Activated CD4-positive, alpha-beta T cell treated with anti-CD3 and anti-CD28 coated beads for 36 hours (primary cell): ENCODE measurements at regions of chr19 and their contacts with region 1.

Region 1: DNA sequence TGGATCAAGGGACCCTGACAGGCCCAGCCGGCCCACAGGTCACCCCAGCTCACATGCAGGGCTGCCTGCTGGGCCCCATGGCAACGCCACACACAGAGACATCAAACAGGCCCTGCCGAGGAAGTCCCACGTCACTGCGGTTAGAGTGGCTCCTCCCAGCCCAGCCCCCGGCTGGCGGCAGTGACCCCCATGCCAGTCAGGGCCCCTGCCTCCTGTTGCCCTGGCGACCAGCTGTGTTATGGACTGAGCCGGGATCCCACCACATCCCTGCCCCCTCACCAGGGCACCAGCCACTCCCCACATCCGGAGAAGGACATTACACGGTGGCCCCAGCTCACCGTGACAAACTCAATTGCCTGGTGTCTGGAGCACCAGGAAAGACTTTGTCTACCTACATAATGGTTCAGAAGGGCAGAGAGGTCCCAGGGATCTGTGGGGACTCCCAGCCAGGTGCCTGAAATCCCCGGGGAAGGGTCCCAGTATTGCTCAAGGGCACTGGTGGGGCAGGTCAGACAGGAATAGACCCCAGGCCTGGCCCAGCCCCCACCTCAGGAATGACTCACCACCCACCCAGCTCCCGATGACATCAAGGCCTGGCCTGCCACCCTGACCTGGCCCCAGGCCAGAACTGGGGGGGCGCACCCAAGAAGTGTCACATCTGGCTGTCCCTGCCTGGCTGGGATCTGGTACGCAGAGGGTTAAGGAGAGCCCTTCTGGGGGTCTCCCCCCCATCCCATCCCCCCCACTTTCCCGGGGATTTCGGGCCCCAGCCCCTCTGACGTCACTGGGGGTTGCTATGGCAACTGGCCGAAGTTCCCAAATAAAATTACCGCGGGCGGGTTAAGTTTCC is 30.2 kb upstream of the NANOS3 start:
- DNase-seq: peak; percentile 97
- ATAC-seq: peak; percentile 69
- H3K4me3 Mint-ChIP-seq: peak overlapping the region; percentile 71
- H3K27ac Mint-ChIP-seq: peak overlapping the region; percentile 97
- H3K4me1 Mint-ChIP-seq: peaks cover 56% of the 10 kb centered on the region
- H3K27me3 Mint-ChIP-seq: no peaks in the 10 kb centered on the region

Region 2: DNA sequence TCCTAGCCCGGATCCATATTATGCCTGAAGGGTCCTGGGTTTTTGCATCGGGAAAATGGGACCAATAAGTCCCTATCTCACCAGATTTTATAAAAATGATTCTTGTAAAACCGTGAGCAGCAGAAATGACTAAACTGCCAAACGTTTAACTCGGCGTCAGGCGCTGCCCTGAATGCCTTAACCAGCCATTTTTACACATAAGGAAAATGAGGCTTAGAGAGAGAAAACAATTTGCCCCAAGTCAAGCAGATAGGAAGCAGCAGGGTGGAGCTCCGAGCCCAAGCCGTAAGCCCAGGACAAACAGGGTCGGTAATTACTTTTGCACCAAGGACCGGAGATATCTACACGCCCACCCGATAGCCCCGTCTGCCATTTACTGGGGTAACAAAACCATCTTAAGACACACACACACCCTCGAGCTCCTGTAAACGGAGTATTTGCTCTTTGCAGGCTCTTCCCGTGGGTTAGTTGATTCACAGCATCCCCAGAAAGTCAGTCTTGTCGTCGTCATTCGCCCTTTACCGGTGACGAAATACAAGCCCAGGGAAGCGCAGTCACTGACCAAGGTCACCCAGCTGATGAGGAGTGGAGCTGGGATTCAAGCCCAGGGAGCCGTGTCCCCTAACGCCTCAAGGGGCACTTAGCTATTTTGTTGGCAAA is 98.5 kb before region 1 on chr19:
- CTCF ChIA-PET with region 1: interaction called, 3 read pairs
- POLR2A ChIA-PET with region 1: no interaction called
- intact Hi-C with region 1: loop called in 1 of 2 experiments (anchors 1 kb)
- DNase-seq: peak; percentile 50
- ATAC-seq: peak; percentile 2
- H3K4me3 Mint-ChIP-seq: peak overlapping the region; percentile 80
- H3K27ac Mint-ChIP-seq: peak overlapping the region; percentile 84
- H3K4me1 Mint-ChIP-seq: peaks cover 30% of the 10 kb centered on the region
- H3K27me3 Mint-ChIP-seq: no peaks in the 10 kb centered on the region

Region 3: DNA sequence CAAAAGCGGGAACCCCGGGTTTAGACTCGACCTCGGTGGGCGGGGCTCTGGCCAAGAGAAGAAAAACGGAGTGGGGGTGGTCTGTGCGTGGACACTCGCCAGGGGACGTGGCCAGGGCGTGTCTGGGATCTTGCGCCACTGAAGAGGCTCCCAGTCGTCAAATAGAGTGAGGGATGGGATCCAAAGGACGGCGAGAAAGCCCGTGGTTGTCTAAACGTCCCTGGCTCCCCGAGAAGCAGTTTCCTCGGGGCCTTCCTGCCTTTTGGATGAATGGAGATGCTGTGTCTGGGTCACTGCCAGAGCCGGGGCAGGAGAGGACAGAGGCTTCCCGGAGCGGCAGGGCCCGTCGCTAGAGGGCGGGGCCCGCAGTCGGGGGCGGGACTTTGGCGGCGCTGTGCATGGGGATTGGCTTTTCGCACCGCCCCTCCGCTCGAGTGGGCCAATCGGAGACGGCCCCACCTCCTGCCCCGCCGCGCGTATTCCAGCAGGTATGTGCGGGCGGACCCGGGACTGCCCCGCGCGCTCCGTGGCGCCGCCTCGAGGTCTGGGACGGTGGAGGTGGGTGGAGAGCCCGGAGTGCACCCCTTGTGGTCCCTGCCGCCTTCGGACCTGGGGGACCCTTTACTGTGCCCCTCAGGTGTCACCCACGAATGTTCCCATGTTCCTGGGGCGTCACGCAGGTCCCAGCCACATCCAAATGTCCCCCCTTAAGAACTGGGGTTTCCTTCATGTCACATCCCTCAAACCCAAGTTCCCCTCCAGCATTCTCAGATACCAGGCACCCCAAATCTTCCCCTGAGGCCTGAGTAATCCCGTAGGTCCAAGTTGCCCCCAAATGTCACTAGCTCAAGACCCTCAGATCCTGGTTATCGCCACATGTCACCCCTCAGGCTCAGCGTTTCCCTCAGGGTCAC is 13.2 kb before region 1 on chr19:
- CTCF ChIA-PET with region 1: interaction called, 6 read pairs
- POLR2A ChIA-PET with region 1: interaction called, 36 read pairs
- intact Hi-C with region 1: loop called in 1 of 2 experiments (anchors 2 kb)
- DNase-seq: peak; percentile 97
- ATAC-seq: peak; percentile 90
- H3K4me3 Mint-ChIP-seq: peak overlapping the region; percentile 65
- H3K27ac Mint-ChIP-seq: peak overlapping the region; percentile 91
- H3K4me1 Mint-ChIP-seq: peaks cover 37% of the 10 kb centered on the region
- H3K27me3 Mint-ChIP-seq: no peaks in the 10 kb centered on the region

Region 4: DNA sequence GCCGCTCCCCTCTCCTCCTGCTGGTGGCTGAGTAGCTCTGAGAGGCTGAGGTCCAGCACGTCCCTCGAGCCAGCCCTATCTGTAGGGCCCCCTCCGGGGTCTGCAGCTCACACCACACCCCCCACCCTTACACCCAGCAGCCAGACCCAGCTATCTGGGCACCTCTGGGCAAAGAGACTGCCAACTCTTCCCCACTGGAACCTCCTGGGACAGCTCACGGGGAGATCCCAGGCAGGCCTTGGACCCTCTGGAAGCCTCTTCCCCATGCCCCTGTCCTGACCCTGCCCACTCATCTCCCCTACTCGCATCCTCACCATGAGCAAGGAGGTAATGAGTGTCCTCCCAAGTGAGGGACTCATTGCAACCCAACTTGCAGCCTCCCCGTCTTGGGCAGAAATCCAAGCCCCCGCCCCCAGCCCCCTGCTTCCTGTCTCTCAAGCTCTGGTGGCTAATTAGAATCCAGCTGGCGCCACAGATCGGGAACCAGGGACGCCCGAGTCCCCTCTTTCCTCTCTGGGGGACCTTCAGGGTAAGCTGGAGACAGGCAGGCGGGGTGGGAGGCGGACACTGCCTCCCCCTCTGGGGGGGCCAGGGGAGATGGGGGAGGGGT is 337.1 kb after region 1 on chr19:
- CTCF ChIA-PET with region 1: no interaction called
- POLR2A ChIA-PET with region 1: no interaction called
- intact Hi-C with region 1: no loop called
- DNase-seq: no peak
- ATAC-seq: peak; percentile 33
- H3K4me3 Mint-ChIP-seq: no peak overlapping the region
- H3K27ac Mint-ChIP-seq: no peak overlapping the region
- H3K4me1 Mint-ChIP-seq: no peaks in the 10 kb centered on the region
- H3K27me3 Mint-ChIP-seq: no peaks in the 10 kb centered on the region

Region 5: DNA sequence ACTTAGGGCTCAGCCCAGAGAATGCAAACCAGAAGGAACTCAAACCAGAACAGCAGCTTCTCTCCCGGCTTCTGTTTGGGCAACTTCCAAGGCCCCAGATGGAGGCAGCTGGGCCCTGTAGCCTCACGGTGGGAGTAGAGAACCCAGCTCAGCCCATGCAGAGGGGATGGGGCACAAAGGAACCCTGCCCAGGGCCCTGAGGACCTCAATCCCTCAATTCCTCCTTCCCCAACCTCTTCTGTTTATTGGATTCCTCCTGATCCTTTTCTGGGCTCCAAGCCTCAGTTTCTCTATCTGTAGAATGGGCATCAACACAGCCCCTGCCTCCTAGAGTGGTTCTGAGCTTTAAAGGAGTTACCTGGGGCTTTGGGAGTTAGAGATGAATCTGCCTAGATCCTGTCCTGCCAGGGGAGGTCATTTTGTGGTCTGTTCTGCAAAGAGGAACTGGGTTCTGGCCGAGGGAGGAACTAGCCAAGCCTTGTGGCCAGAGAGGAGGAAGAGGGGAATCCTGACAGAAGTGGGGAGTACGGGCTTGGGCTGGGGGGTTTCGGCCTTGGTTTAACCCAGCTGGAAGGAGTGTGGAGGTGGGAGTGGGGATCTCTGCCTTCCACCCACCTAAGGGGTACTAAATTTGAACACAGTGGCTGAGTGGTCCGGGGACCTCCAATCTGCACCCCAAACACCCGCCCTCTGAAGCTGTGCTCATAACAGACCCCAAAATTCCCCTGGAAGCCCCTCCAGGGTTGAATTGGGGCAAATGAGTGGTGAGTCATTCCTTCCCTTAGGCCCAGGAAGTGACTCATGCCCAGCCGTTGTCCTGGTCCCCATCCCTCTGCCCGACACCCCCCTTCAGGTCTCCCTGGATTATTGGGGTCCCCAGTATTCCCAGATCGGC is 537.1 kb after region 1 on chr19:
- CTCF ChIA-PET with region 1: no interaction called
- POLR2A ChIA-PET with region 1: no interaction called
- intact Hi-C with region 1: loop called in 1 of 2 experiments (anchors 5 kb)
- DNase-seq: peak; percentile 72
- ATAC-seq: peak; percentile 10
- H3K4me3 Mint-ChIP-seq: peak overlapping the region; percentile 92
- H3K27ac Mint-ChIP-seq: peak overlapping the region; percentile 99
- H3K4me1 Mint-ChIP-seq: peaks cover 40% of the 10 kb centered on the region
- H3K27me3 Mint-ChIP-seq: no peaks in the 10 kb centered on the region